ENCODE measurements at regions of chr5 and their contacts with region 1.

Region 1: GRCh38 chr5:38193015-38193581 is 65.3 kb upstream of the EGFLAM start:
- DNase-seq: peak; percentile 63
- H3K4me3 ChIP-seq: no peak overlapping the region
- H3K27ac ChIP-seq: no peak overlapping the region
- H3K4me1 ChIP-seq: no peaks in the 10 kb centered on the region
- H3K27me3 ChIP-seq: no peaks in the 10 kb centered on the region
- CTCF ChIP-seq: peak; percentile 81

Region 2: GRCh38 chr5:37412515-37413277 is 780.4 kb before region 1 on chr5:
- intact Hi-C with region 1: loop called (anchors 2 kb)
- DNase-seq: peak; percentile 64
- H3K4me3 ChIP-seq: no peak overlapping the region
- H3K27ac ChIP-seq: no peak overlapping the region
- H3K4me1 ChIP-seq: no peaks in the 10 kb centered on the region
- H3K27me3 ChIP-seq: no peaks in the 10 kb centered on the region
- CTCF ChIP-seq: peak; percentile 82

Region 3: GRCh38 chr5:37837414-37838032 is 355.6 kb before region 1 on chr5:
- intact Hi-C with region 1: loop called (anchors 2 kb)
- DNase-seq: peak; percentile 71
- H3K4me3 ChIP-seq: peak overlapping the region; percentile 38
- H3K27ac ChIP-seq: peak overlapping the region; percentile 50
- H3K4me1 ChIP-seq: no peaks in the 10 kb centered on the region
- H3K27me3 ChIP-seq: peaks cover 56% of the 10 kb centered on the region
- CTCF ChIP-seq: peak; percentile 62

Region 4: DNA sequence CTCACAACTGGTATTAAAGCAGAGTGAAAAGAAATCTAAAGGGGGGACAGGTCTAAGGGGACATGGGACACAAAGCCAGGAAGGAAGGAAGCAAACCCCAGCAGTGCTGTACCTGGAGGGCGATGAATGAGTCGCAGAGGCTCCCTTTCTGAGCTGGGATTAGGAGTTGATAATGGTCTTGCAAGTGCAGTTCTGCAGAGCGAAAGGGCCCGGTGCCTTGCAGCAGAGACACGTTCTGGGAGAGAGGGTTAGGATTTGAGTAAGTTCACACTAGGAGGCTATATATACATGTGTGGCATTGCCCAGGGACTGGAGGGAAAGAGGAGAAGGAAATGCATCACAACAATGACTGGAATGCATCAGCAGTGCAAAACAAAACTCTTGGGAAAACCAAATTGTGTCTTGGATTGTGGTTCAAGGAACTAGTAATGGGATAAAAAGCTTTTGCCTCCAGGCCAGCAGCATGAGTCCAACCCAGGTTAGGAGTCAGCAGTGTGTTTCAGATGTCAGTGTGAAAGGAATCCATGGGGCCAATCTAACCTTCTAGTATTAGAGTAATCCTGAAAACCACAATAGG is 402.1 kb after region 1 on chr5:
- intact Hi-C with region 1: no loop called
- DNase-seq: no peak
- H3K4me3 ChIP-seq: no peak overlapping the region
- H3K27ac ChIP-seq: no peak overlapping the region
- H3K4me1 ChIP-seq: no peaks in the 10 kb centered on the region
- H3K27me3 ChIP-seq: no peaks in the 10 kb centered on the region
- CTCF ChIP-seq: no peak

Region 5: DNA sequence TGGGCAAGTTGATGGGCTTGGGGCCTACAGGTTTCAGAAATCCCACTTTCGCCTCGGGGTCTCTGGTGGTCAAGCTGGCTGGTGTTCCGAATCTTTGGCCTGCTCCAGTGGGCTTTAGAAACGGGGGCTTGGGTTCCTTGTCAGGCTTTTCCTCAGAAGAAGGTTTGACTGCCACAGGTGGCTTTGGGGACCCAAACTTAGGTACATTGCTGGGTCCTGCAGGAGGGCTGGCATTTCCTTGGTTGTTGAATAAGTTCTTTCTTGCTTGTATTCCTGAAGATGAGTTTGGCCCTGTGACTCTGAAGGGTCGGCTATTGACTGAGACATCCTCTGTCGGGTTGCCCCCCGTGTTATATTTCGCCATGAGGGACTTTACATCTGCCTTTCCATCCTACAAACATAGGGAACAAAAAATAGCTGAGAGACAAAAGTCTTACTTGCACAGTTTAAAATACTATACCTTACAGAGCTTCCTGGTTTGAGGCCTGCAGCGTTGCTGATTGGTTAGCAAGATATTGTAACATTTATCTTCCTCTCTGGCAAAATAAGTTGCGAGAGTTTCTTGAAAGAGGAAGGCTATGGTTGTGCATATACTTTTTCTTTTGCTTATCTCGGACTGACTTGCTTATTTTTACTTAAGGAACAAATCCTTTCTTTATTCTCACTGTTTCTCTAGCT is 1009.6 kb after region 1 on chr5:
- intact Hi-C with region 1: no loop called
- DNase-seq: no peak
- H3K4me3 ChIP-seq: peak overlapping the region; percentile 4
- H3K27ac ChIP-seq: peak overlapping the region; percentile 43
- H3K4me1 ChIP-seq: no peaks in the 10 kb centered on the region
- H3K27me3 ChIP-seq: no peaks in the 10 kb centered on the region
- CTCF ChIP-seq: no peak